ENCODE measurements at regions of chr11 and their contacts with region 1.

Region 1: GRCh38 chr11:73810637-73811036 is 23.0 kb downstream of the MRPL48 start:
- DNase-seq: no peak
- H3K4me3 ChIP-seq: no peak overlapping the region
- H3K27ac ChIP-seq: no peak overlapping the region
- H3K4me1 ChIP-seq: no peaks in the 10 kb centered on the region
- H3K27me3 ChIP-seq: no peaks in the 10 kb centered on the region
- CTCF ChIP-seq: no peak
- POLR2A ChIP-seq: no peak

Region 2: DNA sequence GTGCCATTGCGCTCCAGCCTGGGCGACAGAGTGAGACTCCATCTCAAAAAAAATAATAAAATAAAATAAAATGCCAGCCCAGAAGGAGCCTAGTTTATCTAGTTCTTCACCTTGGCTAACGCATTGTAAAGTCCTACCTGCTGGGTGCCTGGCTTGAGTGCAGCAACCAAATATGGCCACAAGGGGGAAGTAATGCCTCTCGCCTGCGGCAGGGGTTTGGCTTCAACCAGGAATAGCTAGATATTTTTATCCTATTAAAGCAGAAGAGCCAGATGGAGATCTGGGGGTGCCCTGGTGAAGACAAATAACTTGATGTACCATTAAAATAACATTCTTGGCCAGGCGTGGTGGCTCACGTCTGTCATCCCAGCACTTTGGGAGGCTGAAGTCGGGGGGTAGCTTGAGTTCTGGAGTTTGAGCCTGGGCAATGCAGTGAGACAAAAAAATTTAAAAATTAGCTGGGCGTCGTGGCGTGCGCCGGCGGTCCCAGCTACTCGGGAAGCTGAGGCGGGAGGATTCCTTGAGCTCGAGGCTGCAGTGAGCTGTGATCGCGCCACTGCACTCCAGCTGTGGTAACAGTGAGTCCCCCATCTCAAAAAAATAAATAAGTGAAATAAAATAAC is 184.8 kb before region 1 on chr11:
- intact Hi-C with region 1: no loop called
- DNase-seq: peak; percentile 56 to 77
- H3K4me3 ChIP-seq: peak overlapping the region in 1 of 3 donors; percentile 46
- H3K27ac ChIP-seq: no peak overlapping the region
- H3K4me1 ChIP-seq: no peaks in the 10 kb centered on the region
- H3K27me3 ChIP-seq: no peaks in the 10 kb centered on the region
- CTCF ChIP-seq: peak; percentile 80 to 91 (median 84)
- POLR2A ChIP-seq: no peak

Region 3: GRCh38 chr11:73779084-73779902 is 31.3 kb before region 1 on chr11:
- intact Hi-C with region 1: no loop called
- DNase-seq: peak; percentile 98 to 99
- H3K4me3 ChIP-seq: peak overlapping the region; percentile 53 to 65 (median 59)
- H3K27ac ChIP-seq: peak overlapping the region; percentile 94 to 96
- H3K4me1 ChIP-seq: no peaks in the 10 kb centered on the region
- H3K27me3 ChIP-seq: no peaks in the 10 kb centered on the region
- CTCF ChIP-seq: peak in 1 of 3 donors; percentile 14
- POLR2A ChIP-seq: peak; percentile 45

Region 4: DNA sequence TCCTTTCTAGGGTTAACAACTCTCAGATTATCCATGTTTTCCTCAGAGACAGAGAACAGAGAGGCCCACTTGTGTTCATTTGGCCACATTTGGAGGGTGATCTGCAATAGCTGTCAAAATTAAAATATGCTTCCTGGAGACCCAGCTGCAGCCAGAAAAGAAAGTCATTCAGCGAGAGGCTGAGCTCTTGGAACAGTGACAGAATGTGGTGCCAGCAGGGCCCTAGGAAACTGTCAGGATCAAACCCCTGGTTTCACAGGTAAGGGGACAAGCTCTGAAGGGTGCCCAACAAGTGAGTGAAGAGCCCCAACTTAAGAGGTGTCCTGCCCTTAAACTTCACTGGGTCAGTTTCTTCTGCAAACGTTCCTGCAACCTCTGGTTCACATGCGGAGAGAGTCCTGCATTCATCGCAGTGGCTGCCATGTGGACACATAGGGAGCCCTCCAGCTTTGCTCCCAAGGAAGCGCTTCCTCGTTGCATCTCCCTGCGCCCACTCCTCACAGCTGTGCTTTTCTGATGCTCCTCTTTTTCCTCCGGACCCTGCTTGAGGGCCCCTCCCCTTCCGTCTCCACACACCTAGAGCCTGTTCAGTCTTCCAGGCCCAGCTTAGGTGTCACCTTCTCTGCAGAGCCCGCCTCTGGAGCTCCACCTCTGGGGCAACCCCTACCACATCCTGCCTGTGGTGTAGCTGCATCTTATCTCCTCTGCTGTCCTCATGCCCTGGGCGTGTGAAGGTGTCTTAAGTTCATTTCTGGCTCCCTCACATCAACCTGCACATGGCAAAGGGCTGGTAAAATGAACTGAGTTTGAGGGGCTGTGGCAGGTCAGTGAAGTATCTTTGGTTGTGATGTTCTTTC is 194.3 kb after region 1 on chr11:
- intact Hi-C with region 1: loop called (anchors 5 kb)
- DNase-seq: no peak
- H3K4me3 ChIP-seq: no peak overlapping the region
- H3K27ac ChIP-seq: peak overlapping the region; percentile 7 to 21
- H3K4me1 ChIP-seq: no peaks in the 10 kb centered on the region
- H3K27me3 ChIP-seq: no peaks in the 10 kb centered on the region
- CTCF ChIP-seq: no peak
- POLR2A ChIP-seq: no peak

Measured in breast epithelium (tissue), 4 donors.